ENCODE measurements at regions of chr1 and their contacts with region 1.

Region 1: GRCh38 chr1:77796695-77797416 is 17.4 kb downstream of the MIGA1 start:
- DNase-seq: no peak
- ATAC-seq: no peak
- H3K4me3 ChIP-seq: no peak overlapping the region
- H3K4me3 Mint-ChIP-seq: no peak overlapping the region
- H3K27ac ChIP-seq: no peak overlapping the region
- H3K27ac Mint-ChIP-seq: no peak overlapping the region
- H3K4me1 ChIP-seq: no peaks in the 10 kb centered on the region
- H3K4me1 Mint-ChIP-seq: peaks cover 42% of the 10 kb centered on the region
- H3K27me3 ChIP-seq: no peaks in the 10 kb centered on the region
- H3K27me3 Mint-ChIP-seq: no peaks in the 10 kb centered on the region
- CTCF ChIP-seq: no peak

Region 2: DNA sequence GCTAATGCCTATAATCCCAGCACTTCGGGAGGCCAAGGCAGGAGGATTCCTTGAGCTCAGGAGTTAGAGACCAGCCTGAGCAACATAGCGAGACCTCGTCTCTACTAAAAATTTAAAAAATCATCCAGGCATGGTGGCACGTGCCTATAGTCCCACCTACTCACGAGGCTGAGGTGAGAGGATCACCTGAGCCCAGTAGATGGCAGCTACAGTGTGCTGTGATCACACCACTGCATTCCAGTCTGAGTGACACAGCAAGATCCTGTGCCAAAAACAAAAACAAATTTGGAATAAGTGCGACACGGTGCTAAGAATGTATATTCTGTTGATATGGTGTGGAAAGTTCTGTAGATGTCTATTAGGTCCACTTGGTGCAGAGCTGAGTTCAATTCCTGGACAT is 52.3 kb before region 1 on chr1:
- CTCF ChIA-PET with region 1: no interaction called
- POLR2A ChIA-PET with region 1: no interaction called
- intact Hi-C with region 1: loop called in 1 of 2 experiments (anchors 10 kb)
- DNase-seq: no peak
- ATAC-seq: no peak
- H3K4me3 ChIP-seq: no peak overlapping the region
- H3K4me3 Mint-ChIP-seq: no peak overlapping the region
- H3K27ac ChIP-seq: no peak overlapping the region
- H3K27ac Mint-ChIP-seq: peak overlapping the region; percentile 47
- H3K4me1 ChIP-seq: no peaks in the 10 kb centered on the region
- H3K4me1 Mint-ChIP-seq: peaks cover 57% of the 10 kb centered on the region
- H3K27me3 ChIP-seq: no peaks in the 10 kb centered on the region
- H3K27me3 Mint-ChIP-seq: no peaks in the 10 kb centered on the region
- CTCF ChIP-seq: no peak

Region 3: GRCh38 chr1:78340006-78340405 is 543.1 kb after region 1 on chr1:
- CTCF ChIA-PET with region 1: no interaction called
- POLR2A ChIA-PET with region 1: no interaction called
- intact Hi-C with region 1: no loop called
- DNase-seq: no peak
- ATAC-seq: no peak
- H3K4me3 ChIP-seq: no peak overlapping the region
- H3K4me3 Mint-ChIP-seq: no peak overlapping the region
- H3K27ac ChIP-seq: no peak overlapping the region
- H3K27ac Mint-ChIP-seq: no peak overlapping the region
- H3K4me1 ChIP-seq: no peaks in the 10 kb centered on the region
- H3K4me1 Mint-ChIP-seq: no peaks in the 10 kb centered on the region
- H3K27me3 ChIP-seq: no peaks in the 10 kb centered on the region
- H3K27me3 Mint-ChIP-seq: peaks cover 3% of the 10 kb centered on the region
- CTCF ChIP-seq: no peak

Measured in CD8-positive, alpha-beta T cell (primary cell).